Activated CD4-positive, alpha-beta T cell treated with anti-CD3 and anti-CD28 coated beads for 36 hours (primary cell): ENCODE measurements at regions of chr10 and their contacts with region 1.

Region 1: DNA sequence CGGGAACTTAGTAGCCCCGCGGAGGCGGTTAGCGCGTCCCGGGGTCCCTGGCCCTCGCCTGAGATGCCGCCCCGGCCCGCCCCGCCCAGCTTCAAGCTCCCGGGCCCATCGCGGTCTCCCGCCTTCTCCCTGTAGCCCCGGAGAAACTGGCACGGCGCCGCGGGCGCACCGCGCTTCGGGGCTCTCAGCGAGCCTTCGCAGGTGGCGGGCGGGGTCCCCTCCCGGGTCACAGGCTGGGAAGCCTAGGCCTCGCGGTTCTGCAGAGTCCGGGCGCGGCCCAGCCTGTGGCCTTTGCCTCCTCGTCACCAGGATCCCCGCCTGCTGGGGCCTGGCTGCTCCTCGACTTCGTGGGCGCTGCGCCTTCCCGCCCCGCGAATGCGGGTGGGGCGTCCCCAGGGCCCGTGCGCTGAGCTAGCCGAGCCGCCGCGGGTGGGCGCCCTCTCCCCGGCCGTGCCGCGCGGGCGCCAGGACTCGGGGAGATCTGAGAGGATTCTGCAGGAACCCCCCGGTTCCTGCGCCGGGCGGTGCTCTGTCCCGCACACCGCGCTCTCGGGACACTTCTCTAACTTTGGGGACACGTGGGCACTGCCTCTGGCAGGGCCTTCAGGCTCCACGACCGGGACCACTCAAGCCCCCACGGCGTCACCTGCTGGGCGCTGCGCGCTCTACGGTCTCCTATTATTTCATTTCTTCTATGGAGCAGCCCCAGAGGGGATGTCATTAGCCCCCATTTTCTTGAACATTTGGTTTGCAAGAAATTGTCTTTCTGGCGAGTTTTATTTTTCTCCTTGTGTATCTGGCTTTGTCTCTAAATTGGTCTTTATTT is 682 bp upstream of the RGS10 start:
- DNase-seq: peak; percentile 80
- ATAC-seq: peak; percentile 34
- H3K4me3 Mint-ChIP-seq: peak overlapping the region; percentile 77
- H3K27ac Mint-ChIP-seq: peak overlapping the region; percentile 89
- H3K4me1 Mint-ChIP-seq: peaks cover 31% of the 10 kb centered on the region
- H3K27me3 Mint-ChIP-seq: no peaks in the 10 kb centered on the region

Region 2: DNA sequence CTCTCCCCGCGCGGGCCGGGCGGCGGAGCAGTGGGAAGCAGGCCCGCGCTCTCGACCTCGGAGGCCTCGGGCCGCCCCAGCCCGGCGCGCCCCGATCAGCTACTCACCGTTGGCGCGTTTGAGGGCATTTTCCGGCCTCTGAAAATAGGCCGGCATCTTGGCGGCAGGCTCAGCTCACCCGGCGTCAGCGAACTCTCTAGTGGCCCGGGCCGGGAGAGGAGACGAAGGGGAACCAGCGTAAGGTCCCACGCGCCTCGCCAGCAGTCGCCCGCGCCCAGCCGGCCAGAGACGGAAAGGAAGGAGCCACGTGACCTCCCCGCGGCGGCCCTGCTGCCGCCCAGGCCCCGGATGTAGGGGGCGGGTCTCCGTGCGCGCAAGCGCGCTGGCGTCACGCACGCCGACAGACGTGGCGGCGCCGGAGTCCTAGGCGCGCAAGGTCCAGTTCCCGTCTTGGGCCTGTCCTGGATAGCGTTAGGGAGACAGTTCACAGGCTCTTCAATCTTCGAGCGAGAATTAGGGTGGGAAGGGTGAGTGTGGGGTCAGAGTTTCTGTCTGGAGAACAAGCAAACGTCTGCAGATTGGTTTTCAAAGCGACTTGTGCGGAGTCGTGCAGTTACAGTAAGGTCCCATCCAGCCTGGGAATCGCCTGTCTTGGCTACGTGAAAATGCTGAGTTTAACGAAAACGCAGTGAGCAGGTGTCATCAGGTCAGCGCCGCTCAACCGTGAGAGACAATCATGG is 462.5 kb before region 1 on chr10 and contains the start of gene EIF3A:
- CTCF ChIA-PET with region 1: no interaction called
- POLR2A ChIA-PET with region 1: no interaction called
- intact Hi-C with region 1: loop called in 1 of 2 experiments (anchors 2 kb)
- DNase-seq: peak; percentile 95
- ATAC-seq: peak; percentile 82
- H3K4me3 Mint-ChIP-seq: peak within 1 kb of the TSS; percentile 99
- H3K27ac Mint-ChIP-seq: peak within 1 kb of the TSS; percentile 94
- H3K4me1 Mint-ChIP-seq: peaks cover 26% of the 10 kb centered on the region
- H3K27me3 Mint-ChIP-seq: no peaks in the 10 kb centered on the region
- total RNA-seq, gene EIF3A: 132 to 150 TPM

Region 3: DNA sequence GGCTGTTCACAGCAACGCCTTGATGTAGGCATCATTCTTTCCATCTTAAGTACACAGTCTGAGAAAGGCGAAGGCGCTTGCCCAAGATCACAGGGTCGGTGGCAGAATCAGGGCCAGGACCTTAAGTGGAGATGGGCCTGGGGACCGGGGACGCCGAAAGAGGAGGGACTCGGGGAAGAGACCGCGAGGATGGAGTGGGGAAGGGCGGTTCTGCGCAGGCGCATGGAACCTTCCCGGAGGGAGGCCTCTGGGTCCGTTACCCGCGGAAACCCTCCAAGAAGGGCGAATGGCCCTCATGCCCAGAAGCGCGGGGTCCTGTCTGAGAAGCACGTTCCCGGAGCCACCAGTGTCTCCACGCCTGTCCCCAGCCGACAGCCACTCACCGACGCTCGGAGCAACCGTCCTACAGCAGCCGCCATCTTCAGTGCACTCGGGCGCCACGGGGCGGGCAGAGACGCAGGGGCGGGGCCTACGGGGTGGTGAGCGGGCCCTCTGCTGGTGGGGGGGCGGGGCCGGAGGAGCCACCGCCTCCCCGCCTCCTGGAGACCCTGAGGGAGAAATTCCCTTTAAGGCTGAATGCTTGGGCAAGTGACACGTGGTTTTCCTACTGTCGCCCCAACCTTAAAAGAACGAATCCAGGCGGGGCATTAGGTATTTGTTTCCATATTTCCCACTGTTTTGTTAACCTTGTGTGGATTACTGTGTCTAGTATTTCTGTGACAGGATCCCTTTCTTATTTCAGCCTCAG is 364.7 kb before region 1 on chr10 and contains the start of gene PRDX3:
- CTCF ChIA-PET with region 1: no interaction called
- POLR2A ChIA-PET with region 1: no interaction called
- intact Hi-C with region 1: loop called in 1 of 2 experiments (anchors 1 kb)
- DNase-seq: peak; percentile 98
- ATAC-seq: peak; percentile 95
- H3K4me3 Mint-ChIP-seq: peak within 1 kb of the TSS; percentile 88
- H3K27ac Mint-ChIP-seq: peak within 1 kb of the TSS; percentile 95
- H3K4me1 Mint-ChIP-seq: peaks cover 36% of the 10 kb centered on the region
- H3K27me3 Mint-ChIP-seq: no peaks in the 10 kb centered on the region
- total RNA-seq, gene PRDX3: 160 to 217 TPM

Region 4: GRCh38 chr10:119445311-119445934 is 97.8 kb before region 1 on chr10:
- CTCF ChIA-PET with region 1: interaction called, 3 read pairs
- POLR2A ChIA-PET with region 1: no interaction called
- intact Hi-C with region 1: loop called in 1 of 2 experiments (anchors 5 kb)
- DNase-seq: peak; percentile 93
- ATAC-seq: peak; percentile 90
- H3K4me3 Mint-ChIP-seq: no peak overlapping the region
- H3K27ac Mint-ChIP-seq: no peak overlapping the region
- H3K4me1 Mint-ChIP-seq: peaks cover 6% of the 10 kb centered on the region
- H3K27me3 Mint-ChIP-seq: no peaks in the 10 kb centered on the region

Region 5: DNA sequence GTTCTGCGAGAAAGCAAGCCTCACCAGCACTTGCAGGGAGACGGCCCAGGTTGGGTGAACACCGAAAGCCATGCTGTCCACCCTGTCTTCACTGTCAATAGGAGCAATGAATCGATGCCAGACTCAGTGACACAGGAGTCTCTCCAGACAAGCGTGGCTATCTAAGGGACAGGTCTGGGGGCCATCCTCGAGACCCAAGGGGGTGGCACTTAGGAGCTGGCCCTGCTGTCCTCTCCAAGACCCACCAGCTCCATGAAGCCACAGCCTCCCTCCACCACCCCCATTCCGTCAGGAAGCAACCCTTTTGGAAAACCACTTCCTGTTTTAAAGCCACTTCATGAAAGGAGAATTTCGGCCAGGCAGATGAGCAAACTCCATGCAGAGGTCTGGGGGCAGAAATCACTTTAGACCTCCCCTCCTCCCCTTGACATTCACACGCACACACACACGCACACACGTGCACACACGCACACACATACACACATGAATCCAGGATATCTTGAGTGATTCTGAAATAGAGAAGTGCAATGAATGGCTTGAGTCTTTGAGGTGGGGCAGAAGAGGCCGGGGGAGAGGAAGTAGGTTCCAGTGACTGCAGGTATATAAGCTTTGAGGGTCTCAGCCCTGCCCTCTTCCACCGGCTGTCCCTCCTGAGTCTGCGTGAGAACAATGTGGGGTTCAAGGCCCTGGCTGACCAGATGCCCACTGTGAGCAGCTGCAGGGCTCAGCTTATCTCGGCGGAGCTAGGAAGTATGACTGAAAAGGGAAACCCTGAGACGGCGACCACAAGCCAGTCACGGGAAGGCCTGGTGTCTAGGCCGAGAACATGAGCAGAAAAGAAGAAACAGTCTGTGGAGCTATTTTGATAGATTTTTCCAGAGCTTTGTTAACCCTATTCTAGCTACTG is 25.7 kb before region 1 on chr10:
- CTCF ChIA-PET with region 1: interaction called, 14 read pairs
- POLR2A ChIA-PET with region 1: interaction called, 4 read pairs
- intact Hi-C with region 1: loop called (anchors 1 kb)
- DNase-seq: peak; percentile 86
- ATAC-seq: peak; percentile 66
- H3K4me3 Mint-ChIP-seq: peak overlapping the region; percentile 51
- H3K27ac Mint-ChIP-seq: peak overlapping the region; percentile 98
- H3K4me1 Mint-ChIP-seq: peaks cover 57% of the 10 kb centered on the region
- H3K27me3 Mint-ChIP-seq: no peaks in the 10 kb centered on the region

Region 6: GRCh38 chr10:119596537-119597404 is 53.6 kb after region 1 on chr10 and contains the start of gene TIAL1:
- CTCF ChIA-PET with region 1: interaction called, 3 read pairs
- POLR2A ChIA-PET with region 1: interaction called, 5 read pairs
- intact Hi-C with region 1: loop called (anchors 1 kb)
- DNase-seq: peak; percentile 96
- ATAC-seq: peak; percentile 90
- H3K4me3 Mint-ChIP-seq: peak within 1 kb of the TSS; percentile 92
- H3K27ac Mint-ChIP-seq: peak within 1 kb of the TSS; percentile 93
- H3K4me1 Mint-ChIP-seq: peaks cover 49% of the 10 kb centered on the region
- H3K27me3 Mint-ChIP-seq: no peaks in the 10 kb centered on the region
- total RNA-seq, gene TIAL1: 187 to 197 TPM

Region 7: DNA sequence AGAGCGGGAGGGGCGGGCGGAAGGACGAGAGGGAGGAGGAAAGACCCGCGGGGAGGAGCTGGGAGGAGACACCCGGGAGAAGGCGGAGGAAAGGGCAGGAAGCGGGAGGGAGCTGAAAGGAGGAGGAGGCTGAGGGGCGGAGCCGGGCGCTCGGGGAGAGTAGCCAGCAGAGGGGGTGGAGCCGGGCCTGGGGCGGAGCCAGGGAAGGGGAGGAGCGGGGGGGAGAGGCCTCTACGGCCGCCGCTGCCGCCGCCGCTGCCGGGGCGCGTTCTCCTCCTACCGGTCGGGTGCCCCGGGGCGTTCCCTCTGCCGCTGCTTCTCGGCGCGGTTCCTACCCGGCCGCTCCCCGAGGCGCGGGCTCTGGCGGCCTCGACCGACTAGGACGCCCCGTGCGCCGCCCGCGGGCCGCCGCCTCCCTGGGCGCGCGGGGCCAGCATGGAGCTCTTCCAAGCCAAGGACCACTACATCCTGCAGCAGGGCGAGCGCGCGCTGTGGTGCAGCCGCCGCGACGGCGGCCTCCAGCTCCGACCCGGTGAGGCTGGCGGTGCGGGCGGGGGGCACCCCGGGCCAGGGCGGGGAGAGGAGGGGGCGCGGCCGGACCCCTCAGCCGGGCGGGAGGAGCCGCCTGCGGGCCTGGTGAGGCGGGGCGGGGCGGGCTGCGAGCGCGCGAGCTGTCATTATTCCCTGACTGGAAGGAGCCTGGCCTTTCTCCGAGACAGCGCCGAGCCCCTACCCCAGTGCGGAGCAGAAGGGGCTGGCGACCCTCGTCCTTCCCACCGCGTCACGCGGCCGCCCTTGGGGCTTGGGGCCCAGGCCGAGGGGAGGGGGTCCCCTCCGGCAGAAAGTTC is 182.9 kb after region 1 on chr10 and contains the start of gene INPP5F:
- CTCF ChIA-PET with region 1: interaction called, 3 read pairs
- POLR2A ChIA-PET with region 1: no interaction called
- intact Hi-C with region 1: loop called (anchors 5 kb)
- DNase-seq: peak; percentile 100
- ATAC-seq: peak; percentile 95
- H3K4me3 Mint-ChIP-seq: peak within 1 kb of the TSS; percentile 86
- H3K27ac Mint-ChIP-seq: peak within 1 kb of the TSS; percentile 73
- H3K4me1 Mint-ChIP-seq: peaks cover 47% of the 10 kb centered on the region
- H3K27me3 Mint-ChIP-seq: no peaks in the 10 kb centered on the region
- total RNA-seq, gene INPP5F: 10.9 to 12.6 TPM